Mammary epithelial cell (primary cell): ENCODE measurements at regions of chr6 and their contacts with region 1.

Region 1: GRCh38 chr6:37102279-37103168 is 67.4 kb upstream of the PIM1 start:
- DNase-seq: peak; percentile 74
- H3K4me3 ChIP-seq: peak overlapping the region; percentile 19 to 34 (median 22)
- H3K27ac ChIP-seq: peak overlapping the region; percentile 66
- H3K4me1 ChIP-seq: peaks cover 19% of the 10 kb centered on the region
- H3K27me3 ChIP-seq: no peaks in the 10 kb centered on the region
- CTCF ChIP-seq: no peak

Region 2: DNA sequence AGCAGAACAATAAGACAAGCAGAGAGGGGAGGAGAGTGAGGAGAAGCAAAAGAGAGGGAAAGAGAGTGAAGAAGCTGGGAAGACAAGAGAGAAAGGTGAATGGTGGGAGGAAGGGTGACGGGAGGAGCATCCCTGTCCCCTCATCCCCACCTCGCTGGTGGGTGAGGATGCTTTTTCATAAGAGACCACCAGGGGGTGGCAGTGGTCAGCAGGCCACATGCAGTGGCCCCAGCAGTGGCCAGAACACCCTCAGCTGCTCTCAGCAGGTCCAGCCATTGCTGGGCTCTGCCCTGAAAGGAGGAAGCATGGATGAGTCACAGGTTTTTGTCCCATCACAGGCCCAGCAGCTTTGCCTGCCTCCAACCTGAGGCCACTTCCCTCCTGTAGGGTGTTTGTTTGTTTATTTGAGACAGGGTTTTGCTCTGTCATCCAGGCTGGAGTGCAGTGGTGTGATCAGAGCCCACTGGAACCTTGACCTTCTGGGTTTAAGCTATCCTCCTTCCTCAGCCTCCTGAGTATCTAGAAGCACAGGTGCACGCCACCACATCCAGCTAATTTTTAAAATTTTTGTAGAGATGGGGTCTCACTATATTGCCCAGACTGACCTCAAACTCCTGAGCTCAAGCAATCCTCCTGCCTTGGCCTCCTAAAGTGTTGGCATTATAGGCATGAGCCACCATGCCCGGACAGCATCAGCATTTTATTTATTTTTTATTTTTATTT is 73.1 kb before region 1 on chr6:
- CTCF ChIA-PET with region 1: no interaction called
- dilution Hi-C with region 1: no loop called
- in situ Hi-C with region 1: no loop called
- intact Hi-C with region 1: no loop called
- DNase-seq: peak; percentile 77
- H3K4me3 ChIP-seq: no peak overlapping the region
- H3K27ac ChIP-seq: no peak overlapping the region
- H3K4me1 ChIP-seq: peaks cover 26% of the 10 kb centered on the region
- H3K27me3 ChIP-seq: no peaks in the 10 kb centered on the region
- CTCF ChIP-seq: peak; percentile 28 to 60

Region 3: GRCh38 chr6:37083243-37084138 is 19.0 kb before region 1 on chr6:
- CTCF ChIA-PET with region 1: no interaction called
- dilution Hi-C with region 1: no loop called
- in situ Hi-C with region 1: no loop called
- intact Hi-C with region 1: loop called (anchors 1 kb)
- DNase-seq: peak; percentile 76
- H3K4me3 ChIP-seq: no peak overlapping the region
- H3K27ac ChIP-seq: peak overlapping the region; percentile 6
- H3K4me1 ChIP-seq: peaks cover 9% of the 10 kb centered on the region
- H3K27me3 ChIP-seq: no peaks in the 10 kb centered on the region
- CTCF ChIP-seq: no peak

Region 4: GRCh38 chr6:37149745-37150144 is 47.2 kb after region 1 on chr6:
- CTCF ChIA-PET with region 1: no interaction called
- dilution Hi-C with region 1: no loop called
- in situ Hi-C with region 1: no loop called
- intact Hi-C with region 1: no loop called
- DNase-seq: no peak
- H3K4me3 ChIP-seq: no peak overlapping the region
- H3K27ac ChIP-seq: no peak overlapping the region
- H3K4me1 ChIP-seq: no peaks in the 10 kb centered on the region
- H3K27me3 ChIP-seq: no peaks in the 10 kb centered on the region
- CTCF ChIP-seq: no peak

Region 5: DNA sequence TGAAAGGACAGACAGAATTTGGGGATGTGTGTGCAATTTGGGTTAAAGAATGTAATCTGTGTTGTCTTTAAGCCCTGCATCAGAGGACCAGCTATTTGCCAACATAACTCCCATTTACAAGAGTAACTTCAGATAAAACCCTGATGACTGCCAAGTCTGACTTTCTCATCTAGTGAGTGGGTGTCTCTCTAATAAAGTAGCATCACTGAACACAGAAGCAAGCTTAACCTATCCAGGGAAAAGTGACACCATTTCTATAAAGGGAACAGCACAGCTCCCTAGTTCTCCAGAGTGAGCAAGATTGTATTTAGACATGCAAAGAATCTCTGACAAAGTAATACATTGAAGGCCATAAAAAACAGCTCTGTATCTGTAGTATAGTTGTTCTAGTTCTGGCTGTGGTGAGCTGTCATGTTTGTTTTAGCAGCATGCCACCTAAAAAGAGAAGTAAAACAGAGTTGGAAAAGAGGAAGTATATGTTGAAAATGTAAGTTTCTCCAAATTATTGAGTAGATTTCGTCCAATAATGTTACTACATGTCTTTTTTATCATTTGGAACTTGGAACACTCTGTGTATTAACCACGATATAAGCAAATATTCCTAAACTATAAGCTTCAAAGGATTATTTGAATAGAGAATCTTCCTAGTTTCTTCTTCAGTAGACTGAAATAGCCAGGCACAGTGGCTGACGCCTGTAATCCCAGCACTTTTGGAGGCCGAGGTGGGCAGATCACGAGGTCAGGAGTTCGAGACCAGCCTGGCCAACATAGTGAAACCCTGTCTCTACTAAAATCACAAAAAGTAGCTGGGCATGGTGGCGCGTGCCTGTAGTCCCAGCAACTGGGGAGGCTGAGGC is 58.6 kb after region 1 on chr6:
- CTCF ChIA-PET with region 1: no interaction called
- dilution Hi-C with region 1: loop called (anchors 5 kb)
- in situ Hi-C with region 1: no loop called
- intact Hi-C with region 1: no loop called
- DNase-seq: no peak
- H3K4me3 ChIP-seq: no peak overlapping the region
- H3K27ac ChIP-seq: no peak overlapping the region
- H3K4me1 ChIP-seq: no peaks in the 10 kb centered on the region
- H3K27me3 ChIP-seq: no peaks in the 10 kb centered on the region
- CTCF ChIP-seq: no peak

Region 6: DNA sequence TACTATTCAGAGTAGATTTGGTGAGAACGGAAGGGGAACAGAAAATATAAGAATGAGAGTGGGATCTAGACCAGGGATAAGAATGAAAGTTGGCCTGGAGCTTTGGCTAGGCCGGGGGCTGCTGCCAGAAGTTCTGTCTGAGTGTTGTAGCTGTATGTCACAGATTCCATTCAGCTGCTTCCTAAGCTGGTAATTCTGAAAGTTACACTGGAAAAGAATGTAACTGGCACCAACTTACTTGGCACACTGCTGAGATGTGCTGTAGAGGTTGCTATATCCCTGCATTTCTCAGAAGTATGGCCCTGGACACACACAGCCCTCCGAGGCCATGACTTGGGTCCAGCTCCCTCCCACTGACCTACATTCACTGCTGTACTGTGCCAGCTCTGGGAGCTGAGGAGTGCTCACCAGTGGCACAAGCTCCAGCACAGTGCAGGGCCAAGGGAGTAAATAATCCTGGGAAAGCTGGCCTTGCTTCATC is 181.2 kb after region 1 on chr6:
- CTCF ChIA-PET with region 1: no interaction called
- dilution Hi-C with region 1: no loop called
- in situ Hi-C with region 1: no loop called
- intact Hi-C with region 1: no loop called
- DNase-seq: no peak
- H3K4me3 ChIP-seq: no peak overlapping the region
- H3K27ac ChIP-seq: no peak overlapping the region
- H3K4me1 ChIP-seq: peaks cover 13% of the 10 kb centered on the region
- H3K27me3 ChIP-seq: no peaks in the 10 kb centered on the region
- CTCF ChIP-seq: no peak